ENCODE measurements at regions of chr2 and their contacts with region 1.

Region 1: GRCh38 chr2:22536133-22536532 is 848.8 kb upstream of the KLHL29 start:
- DNase-seq: no peak
- H3K4me3 ChIP-seq: no peak overlapping the region
- H3K27ac ChIP-seq: no peak overlapping the region
- H3K4me1 ChIP-seq: no peaks in the 10 kb centered on the region
- H3K27me3 ChIP-seq: no peaks in the 10 kb centered on the region
- CTCF ChIP-seq: no peak
- POLR2A ChIP-seq: no peak

Region 2: DNA sequence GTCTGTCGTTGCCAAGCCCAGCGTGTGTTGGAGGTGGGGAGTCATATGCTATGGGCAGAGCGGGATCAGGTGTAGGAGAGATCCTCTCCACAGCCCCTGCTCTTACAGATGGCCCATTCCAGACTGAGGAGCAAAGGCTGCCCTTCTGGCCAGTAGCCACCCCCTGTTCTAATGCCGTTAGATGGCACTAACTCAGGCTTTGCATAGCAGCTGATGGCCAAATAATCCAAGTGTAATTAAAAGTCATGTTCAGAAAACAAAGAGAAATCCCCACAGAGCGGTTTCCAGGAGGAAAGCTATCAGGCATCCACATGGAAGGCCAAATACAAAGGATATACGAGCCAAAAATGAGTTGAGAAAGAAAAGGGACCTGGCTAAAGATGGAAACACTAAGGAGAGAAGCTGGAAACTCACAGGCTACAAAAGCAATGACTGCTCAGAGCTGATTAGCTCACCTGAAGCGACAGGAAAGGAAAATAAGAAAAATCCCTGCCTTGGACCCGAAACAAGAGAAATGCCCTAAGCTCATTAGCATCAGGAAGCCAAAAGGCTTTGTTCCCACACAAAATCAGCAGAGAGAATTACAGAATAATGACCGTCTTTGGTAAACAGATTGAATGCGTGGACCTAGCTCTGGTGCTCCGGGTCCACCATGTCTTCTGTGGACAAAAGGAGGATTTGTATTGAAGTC is 153.5 kb before region 1 on chr2:
- intact Hi-C with region 1: no loop called
- DNase-seq: no peak
- H3K4me3 ChIP-seq: no peak overlapping the region
- H3K27ac ChIP-seq: no peak overlapping the region
- H3K4me1 ChIP-seq: no peaks in the 10 kb centered on the region
- H3K27me3 ChIP-seq: no peaks in the 10 kb centered on the region
- CTCF ChIP-seq: no peak
- POLR2A ChIP-seq: no peak

Region 3: GRCh38 chr2:22656426-22656825 is 120.3 kb after region 1 on chr2:
- intact Hi-C with region 1: loop called (anchors 5 kb)
- DNase-seq: no peak
- H3K4me3 ChIP-seq: no peak overlapping the region
- H3K27ac ChIP-seq: no peak overlapping the region
- H3K4me1 ChIP-seq: no peaks in the 10 kb centered on the region
- H3K27me3 ChIP-seq: no peaks in the 10 kb centered on the region
- CTCF ChIP-seq: no peak
- POLR2A ChIP-seq: no peak

Measured in vagina (tissue), 2 donors.